ENCODE measurements at regions of chr11 and their contacts with region 1.

Region 1: DNA sequence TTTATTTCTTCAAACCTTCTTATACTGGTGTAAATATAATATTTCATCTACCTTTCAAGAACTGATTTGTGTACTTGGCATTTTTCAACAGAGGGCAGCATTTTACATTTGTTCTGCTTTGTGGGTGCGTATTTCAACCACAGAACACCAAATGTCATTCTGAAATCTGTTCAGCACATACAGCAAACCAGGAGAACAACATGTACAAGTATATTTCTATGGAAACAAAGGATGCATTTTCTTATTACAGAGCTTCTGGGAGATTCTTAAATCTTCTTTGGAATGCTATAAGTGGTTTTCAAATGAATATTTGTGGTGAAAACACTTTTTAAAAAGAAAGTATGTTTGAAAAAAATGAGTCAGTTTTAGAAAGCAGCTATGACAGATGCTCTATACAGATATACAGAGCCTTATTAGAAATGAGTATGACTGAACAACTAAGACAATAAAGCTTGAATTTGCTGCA is 946.0 kb downstream of the FAM181B start:
- DNase-seq: peak; percentile 68
- H3K4me3 Mint-ChIP-seq: no peak overlapping the region
- H3K27ac Mint-ChIP-seq: no peak overlapping the region
- H3K4me1 Mint-ChIP-seq: peaks cover 2% of the 10 kb centered on the region
- H3K27me3 Mint-ChIP-seq: no peaks in the 10 kb centered on the region

Region 2: DNA sequence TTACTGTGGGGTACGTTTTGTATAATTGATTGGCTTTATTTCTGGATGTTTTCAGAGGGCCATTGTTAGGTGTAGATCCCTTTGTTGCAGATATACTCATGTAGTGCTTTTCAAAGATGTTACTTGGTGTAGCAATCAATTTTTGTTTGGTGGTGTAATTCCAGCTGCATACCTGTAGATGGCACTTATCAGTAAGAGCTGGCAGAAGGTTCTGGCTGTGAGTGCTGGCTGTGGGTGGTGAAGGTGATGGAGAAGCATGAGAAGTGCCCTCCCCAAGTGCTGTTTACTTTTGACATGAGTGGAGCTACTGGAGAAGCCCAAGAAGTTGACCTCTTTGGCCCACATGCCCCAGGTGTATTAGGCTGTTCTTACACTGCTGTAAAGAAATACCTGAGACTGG is 128.9 kb before region 1 on chr11:
- intact Hi-C with region 1: loop called (anchors 10 kb)
- DNase-seq: peak; percentile 62
- H3K4me3 Mint-ChIP-seq: no peak overlapping the region
- H3K27ac Mint-ChIP-seq: no peak overlapping the region
- H3K4me1 Mint-ChIP-seq: no peaks in the 10 kb centered on the region
- H3K27me3 Mint-ChIP-seq: no peaks in the 10 kb centered on the region

Region 3: DNA sequence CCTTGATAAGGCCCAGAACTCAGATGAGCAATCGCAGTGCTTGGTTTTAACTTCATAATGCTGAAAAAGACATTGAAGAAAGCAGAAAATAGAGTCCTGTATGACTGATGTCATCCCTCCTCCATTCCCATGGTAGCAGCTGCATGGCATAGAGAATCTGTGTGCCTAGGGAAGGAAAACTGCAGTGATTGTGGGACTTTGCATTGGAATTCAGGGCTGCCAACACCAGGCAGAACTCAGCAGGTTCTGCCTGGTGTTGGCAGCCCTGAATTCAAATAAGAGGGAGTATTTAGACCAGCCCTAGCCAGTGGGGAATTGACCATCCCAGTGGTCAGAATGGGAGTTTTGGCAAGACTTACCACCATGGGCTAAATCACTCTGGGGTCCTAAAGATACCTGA is 69.9 kb before region 1 on chr11:
- intact Hi-C with region 1: no loop called
- DNase-seq: no peak
- H3K4me3 Mint-ChIP-seq: no peak overlapping the region
- H3K27ac Mint-ChIP-seq: no peak overlapping the region
- H3K4me1 Mint-ChIP-seq: no peaks in the 10 kb centered on the region
- H3K27me3 Mint-ChIP-seq: no peaks in the 10 kb centered on the region

Region 4: DNA sequence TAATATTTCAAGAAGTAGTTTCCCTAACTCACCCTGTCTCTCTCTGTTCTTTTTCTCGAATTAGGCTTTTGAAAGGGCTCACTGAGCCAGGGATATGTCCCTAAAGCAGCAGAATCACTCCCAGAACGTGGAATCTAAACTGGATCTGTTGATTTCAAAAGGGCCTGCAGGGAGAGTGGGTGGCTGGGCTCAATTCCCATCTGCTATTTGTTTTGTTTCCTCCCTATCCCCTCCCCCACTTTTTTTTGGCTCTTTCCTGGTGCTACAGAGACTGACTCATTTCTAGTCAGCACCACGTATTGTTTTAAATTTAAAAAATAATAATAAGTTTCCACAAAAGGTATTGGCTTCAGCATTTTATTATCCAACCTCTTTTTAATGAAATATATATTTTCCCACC is 15.5 kb before region 1 on chr11:
- intact Hi-C with region 1: no loop called
- DNase-seq: no peak
- H3K4me3 Mint-ChIP-seq: no peak overlapping the region
- H3K27ac Mint-ChIP-seq: no peak overlapping the region
- H3K4me1 Mint-ChIP-seq: no peaks in the 10 kb centered on the region
- H3K27me3 Mint-ChIP-seq: peaks cover 1% of the 10 kb centered on the region

Region 5: DNA sequence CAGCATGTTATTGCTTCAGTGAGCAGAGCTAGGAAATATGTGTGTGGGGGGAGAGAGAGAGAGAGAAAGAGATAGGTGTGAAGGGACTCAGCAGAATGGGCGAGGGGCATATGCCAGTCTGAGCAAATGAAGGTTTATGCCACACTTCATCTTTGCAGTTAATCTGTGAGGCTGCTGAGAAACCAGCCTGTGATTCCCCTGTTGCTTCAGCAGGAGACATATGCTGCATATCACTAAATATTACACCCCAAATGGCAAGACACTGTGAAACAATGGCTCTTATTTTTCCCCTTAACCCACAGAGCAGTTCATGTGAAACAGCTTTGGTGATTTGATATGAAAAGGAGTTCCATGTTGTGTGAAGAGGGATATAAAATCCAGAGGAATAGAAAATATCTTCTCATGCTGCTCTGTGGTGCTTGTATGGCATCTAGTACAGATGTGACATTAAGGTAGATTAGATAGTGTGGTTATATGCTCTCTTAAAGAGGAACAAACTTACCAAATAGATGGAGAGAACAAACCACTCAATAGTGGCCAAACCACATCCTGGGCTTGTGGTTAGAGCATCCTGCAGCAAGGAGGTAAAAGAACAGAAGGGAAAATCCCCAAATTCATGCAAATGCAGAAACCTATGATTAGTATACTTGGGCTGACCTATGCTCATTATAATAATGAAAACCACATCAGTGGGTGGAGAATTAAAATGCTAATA is 81.9 kb after region 1 on chr11:
- intact Hi-C with region 1: loop called (anchors 1 kb)
- DNase-seq: peak; percentile 96
- H3K4me3 Mint-ChIP-seq: peak overlapping the region; percentile 77
- H3K27ac Mint-ChIP-seq: peak overlapping the region; percentile 82
- H3K4me1 Mint-ChIP-seq: peaks cover 38% of the 10 kb centered on the region
- H3K27me3 Mint-ChIP-seq: peaks cover 15% of the 10 kb centered on the region

Region 6: GRCh38 chr11:81963018-81963417 is 175.4 kb after region 1 on chr11:
- intact Hi-C with region 1: loop called (anchors 2 kb)
- DNase-seq: no peak
- H3K4me3 Mint-ChIP-seq: peak overlapping the region; percentile 13
- H3K27ac Mint-ChIP-seq: no peak overlapping the region
- H3K4me1 Mint-ChIP-seq: peaks cover 15% of the 10 kb centered on the region
- H3K27me3 Mint-ChIP-seq: no peaks in the 10 kb centered on the region

Region 7: DNA sequence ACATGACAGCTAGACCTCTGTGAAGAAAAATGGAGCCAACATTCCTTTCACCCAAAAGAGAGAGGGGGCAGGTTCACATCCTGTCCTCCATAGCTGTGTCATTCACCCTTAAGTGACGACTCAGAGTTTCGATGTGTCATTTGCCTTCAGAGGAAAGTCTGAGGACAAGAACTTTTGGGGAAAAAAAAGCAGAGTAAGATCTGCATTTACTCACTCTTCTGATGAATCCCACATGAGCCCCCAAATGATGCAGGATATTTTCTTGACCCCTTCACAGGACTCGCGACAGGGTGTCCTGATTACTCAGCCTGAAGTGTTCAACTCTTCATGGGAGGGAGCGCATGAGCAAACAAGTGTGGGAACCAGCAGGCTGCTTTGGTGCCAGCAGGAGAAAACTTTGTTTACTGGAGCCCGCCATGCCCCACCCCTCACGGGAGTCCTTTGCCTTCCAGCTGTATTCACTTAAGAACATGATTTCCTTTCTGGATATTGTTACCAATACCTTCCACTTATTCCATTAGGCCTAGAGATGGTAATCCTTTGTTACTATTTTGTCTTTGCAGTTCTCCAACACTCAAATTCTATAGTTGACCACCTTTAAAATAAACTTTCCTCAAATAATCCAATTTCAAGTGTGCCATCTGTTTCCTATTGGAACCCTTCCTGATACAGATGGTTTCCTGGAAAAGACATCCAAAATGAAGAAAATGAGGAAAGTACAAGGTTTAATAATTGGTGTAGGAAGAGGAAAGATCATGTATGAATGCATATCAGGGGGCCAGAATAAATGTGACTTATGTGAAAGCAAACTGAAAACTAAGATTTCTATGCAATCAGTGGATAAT is 216.3 kb after region 1 on chr11:
- intact Hi-C with region 1: loop called (anchors 10 kb)
- DNase-seq: peak; percentile 49
- H3K4me3 Mint-ChIP-seq: no peak overlapping the region
- H3K27ac Mint-ChIP-seq: peak overlapping the region; percentile 41
- H3K4me1 Mint-ChIP-seq: peaks cover 20% of the 10 kb centered on the region
- H3K27me3 Mint-ChIP-seq: no peaks in the 10 kb centered on the region

Region 8: GRCh38 chr11:82229341-82229740 is 441.7 kb after region 1 on chr11:
- intact Hi-C with region 1: loop called (anchors 5 kb)
- DNase-seq: peak; percentile 56
- H3K4me3 Mint-ChIP-seq: no peak overlapping the region
- H3K27ac Mint-ChIP-seq: no peak overlapping the region
- H3K4me1 Mint-ChIP-seq: no peaks in the 10 kb centered on the region
- H3K27me3 Mint-ChIP-seq: no peaks in the 10 kb centered on the region